ENCODE measurements at regions of chr15 and their contacts with region 1.

Region 1: GRCh38 chr15:74937596-74938296 is at the start of gene COX5A:
- DNase-seq: peak; percentile 99 to 100
- H3K4me3 ChIP-seq: peak within 1 kb of the TSS; percentile 96
- H3K4me1 ChIP-seq: peaks cover 24% of the 10 kb centered on the region
- H3K27me3 ChIP-seq: no peaks in the 10 kb centered on the region

Region 2: DNA sequence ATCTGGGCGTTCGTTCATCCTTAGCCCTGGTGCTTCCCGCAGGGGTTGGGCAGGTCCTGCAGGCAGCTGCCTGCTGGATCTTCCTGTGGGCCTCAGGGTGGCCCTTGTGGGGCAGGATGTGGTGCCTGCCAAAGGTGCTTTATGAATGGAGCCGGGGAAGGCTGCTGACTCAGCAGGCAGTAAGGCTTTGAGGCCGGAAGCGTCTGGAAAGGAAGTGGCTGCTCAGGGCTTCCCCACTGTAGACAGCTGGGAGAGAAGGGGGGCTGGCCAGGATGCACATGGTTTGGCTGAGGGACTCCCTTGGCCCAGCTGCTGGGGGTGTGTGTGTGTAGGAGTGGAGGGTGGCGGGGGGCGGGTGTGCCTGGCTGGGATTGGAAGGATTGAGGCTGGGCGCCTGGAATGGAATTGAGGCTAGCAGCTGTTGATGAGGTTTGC is 1240.7 kb before region 1 on chr15:
- in situ Hi-C with region 1: no loop called
- DNase-seq: peak in 1 of 2 experiments; percentile 40
- H3K4me3 ChIP-seq: no peak overlapping the region
- H3K4me1 ChIP-seq: no peaks in the 10 kb centered on the region
- H3K27me3 ChIP-seq: no peaks in the 10 kb centered on the region

Region 3: GRCh38 chr15:74889883-74890664 is 47.7 kb before region 1 on chr15 and contains the start of gene MPI:
- in situ Hi-C with region 1: loop called (anchors 5 kb)
- DNase-seq: peak; percentile 95 to 98
- H3K4me3 ChIP-seq: peak within 1 kb of the TSS; percentile 59
- H3K4me1 ChIP-seq: peaks cover 16% of the 10 kb centered on the region
- H3K27me3 ChIP-seq: no peaks in the 10 kb centered on the region

Region 4: GRCh38 chr15:75058127-75058905 is 120.6 kb after region 1 on chr15:
- in situ Hi-C with region 1: no loop called
- DNase-seq: peak in 1 of 2 experiments; percentile 8
- H3K4me3 ChIP-seq: no peak overlapping the region
- H3K4me1 ChIP-seq: no peaks in the 10 kb centered on the region
- H3K27me3 ChIP-seq: no peaks in the 10 kb centered on the region

Region 5: DNA sequence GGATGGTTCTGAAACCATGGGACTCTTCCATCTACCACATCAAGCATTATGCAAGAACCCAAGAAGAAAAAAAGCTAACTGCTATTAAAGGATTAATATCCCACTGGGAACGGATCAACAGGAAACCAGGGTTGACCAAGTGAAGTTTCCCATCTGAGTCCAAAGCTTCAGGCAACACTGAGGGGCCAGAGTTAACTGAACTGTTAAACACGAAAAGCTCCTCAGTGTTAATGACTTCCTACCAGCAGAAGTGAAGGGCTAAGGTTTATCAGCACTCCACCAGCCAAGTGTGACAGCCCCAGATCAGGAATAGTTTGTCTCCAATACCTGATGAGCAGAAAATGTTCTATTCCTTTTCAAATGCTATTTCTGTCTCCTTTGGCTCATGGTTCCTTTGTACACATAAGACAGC is 604.6 kb after region 1 on chr15:
- in situ Hi-C with region 1: no loop called
- DNase-seq: no peak
- H3K4me3 ChIP-seq: no peak overlapping the region
- H3K4me1 ChIP-seq: no peaks in the 10 kb centered on the region
- H3K27me3 ChIP-seq: no peaks in the 10 kb centered on the region

Measured in HAP-1 (cell line).